HepG2 (cell line): ENCODE measurements at regions of chr19 and their contacts with region 1.

Region 1: DNA sequence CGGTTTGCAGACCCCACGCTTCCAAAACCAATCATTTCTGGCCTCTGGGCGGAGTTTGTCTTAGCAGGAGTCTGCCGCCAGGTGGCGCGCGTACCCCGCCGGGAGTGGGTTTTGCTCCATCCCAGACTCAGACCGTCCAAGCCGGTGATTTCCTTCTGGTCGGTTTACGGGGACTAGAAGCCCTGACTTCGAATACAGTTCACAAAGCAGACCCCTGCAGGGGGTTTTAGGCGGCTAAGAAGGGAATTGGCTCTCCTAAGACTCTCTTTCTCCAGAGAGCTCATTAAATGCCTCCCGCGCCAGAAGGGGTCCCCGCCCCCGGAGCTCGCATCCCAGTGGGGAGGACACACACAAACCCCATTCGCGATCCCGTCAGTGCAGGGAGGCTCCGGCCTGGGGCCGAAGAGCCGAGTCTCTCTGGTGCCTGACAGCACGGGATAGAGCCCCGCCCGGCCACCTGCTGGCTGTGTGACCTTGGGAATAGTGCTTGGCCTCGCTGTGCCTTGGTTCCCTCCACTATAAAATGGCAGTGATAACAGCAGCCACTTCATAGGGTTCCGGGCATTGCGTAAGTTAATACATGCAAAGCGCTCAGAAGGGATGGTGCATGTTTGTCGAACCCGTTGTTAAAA is 8.6 kb upstream of the NUP62 start:
- DNase-seq: peak; percentile 55
- ATAC-seq: peak; percentile 81
- H3K4me3 ChIP-seq: peak overlapping the region in 1 of 3 experiments; percentile 59; a peak in 2 of 6 replicates
- H3K27ac ChIP-seq: no peak overlapping the region
- H3K4me1 ChIP-seq: peaks cover 45% of the 10 kb centered on the region
- H3K27me3 ChIP-seq: no peaks in the 10 kb centered on the region
- CTCF ChIP-seq: peak; percentile 93
- EP300 ChIP-seq: no peak
- POLR2A ChIP-seq: no peak
- RAD21 ChIP-seq: peak; percentile 96

Region 2: DNA sequence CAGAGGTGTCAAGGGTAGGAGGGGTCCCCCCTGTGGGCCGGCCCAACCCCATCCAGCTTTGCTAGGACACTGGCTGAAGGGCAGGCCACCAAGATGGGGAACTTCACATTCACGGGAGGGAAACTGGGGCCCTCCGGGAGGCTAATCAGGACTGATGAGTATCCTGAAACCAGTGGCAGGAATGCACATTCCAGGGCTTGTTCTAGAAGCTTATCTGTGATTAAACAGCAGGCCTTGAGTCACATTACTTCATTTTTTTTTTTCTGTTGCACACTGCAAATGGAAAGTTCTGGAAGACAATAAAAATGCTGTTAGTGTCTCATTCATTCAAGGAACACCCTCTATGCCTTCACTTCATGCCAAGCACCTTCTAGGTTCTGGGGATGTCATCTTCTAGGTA is 38.6 kb after region 1 on chr19:
- CTCF ChIA-PET with region 1: no interaction called
- POLR2A ChIA-PET with region 1: no interaction called
- in situ Hi-C with region 1: loop called (anchors 5 kb)
- intact Hi-C with region 1: no loop called
- DNase-seq: no peak
- ATAC-seq: no peak
- H3K4me3 ChIP-seq: no peak overlapping the region
- H3K27ac ChIP-seq: no peak overlapping the region
- H3K4me1 ChIP-seq: no peaks in the 10 kb centered on the region
- H3K27me3 ChIP-seq: no peaks in the 10 kb centered on the region
- CTCF ChIP-seq: no peak
- EP300 ChIP-seq: no peak
- POLR2A ChIP-seq: no peak
- RAD21 ChIP-seq: no peak

Region 3: GRCh38 chr19:49983645-49984229 is 45.9 kb after region 1 on chr19:
- CTCF ChIA-PET with region 1: interaction called, 91 read pairs
- POLR2A ChIA-PET with region 1: interaction called, 4 read pairs
- in situ Hi-C with region 1: loop called (anchors 5 kb)
- intact Hi-C with region 1: loop called (anchors 1 kb)
- DNase-seq: peak; percentile 58
- ATAC-seq: peak; percentile 83
- H3K4me3 ChIP-seq: no peak overlapping the region
- H3K27ac ChIP-seq: no peak overlapping the region
- H3K4me1 ChIP-seq: no peaks in the 10 kb centered on the region
- H3K27me3 ChIP-seq: no peaks in the 10 kb centered on the region
- CTCF ChIP-seq: peak; percentile 93
- EP300 ChIP-seq: no peak
- POLR2A ChIP-seq: no peak
- RAD21 ChIP-seq: peak; percentile 91